ENCODE measurements at regions of chr2 and their contacts with region 1.

Region 1: DNA sequence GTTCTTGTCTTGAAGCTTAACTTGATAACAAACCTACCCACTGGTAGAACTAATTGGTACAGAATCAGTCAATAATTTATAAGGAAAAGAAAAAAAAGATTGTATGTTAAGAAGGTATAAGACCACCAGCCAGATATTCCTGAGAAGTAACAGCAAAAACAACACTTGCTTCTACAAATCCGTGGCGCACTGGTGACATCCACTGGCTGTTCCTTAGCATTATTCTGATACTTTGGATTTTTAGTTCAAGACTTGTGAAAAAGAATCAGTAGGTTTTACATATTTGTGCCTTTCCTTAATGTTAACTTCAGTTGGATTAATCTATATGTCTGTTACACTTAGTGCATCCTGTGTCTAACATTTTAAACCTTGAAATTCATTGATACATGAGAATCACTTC is 141.8 kb downstream of the GRB14 start:
- DNase-seq: no peak
- ATAC-seq: no peak

Region 2: GRCh38 chr2:163182764-163183354 is 1296.6 kb before region 1 on chr2:
- intact Hi-C with region 1: loop called (anchors 5 kb)
- DNase-seq: no peak
- ATAC-seq: no peak